SK-N-SH (cell line): ENCODE measurements at regions of chr4 and their contacts with region 1.

Region 1: DNA sequence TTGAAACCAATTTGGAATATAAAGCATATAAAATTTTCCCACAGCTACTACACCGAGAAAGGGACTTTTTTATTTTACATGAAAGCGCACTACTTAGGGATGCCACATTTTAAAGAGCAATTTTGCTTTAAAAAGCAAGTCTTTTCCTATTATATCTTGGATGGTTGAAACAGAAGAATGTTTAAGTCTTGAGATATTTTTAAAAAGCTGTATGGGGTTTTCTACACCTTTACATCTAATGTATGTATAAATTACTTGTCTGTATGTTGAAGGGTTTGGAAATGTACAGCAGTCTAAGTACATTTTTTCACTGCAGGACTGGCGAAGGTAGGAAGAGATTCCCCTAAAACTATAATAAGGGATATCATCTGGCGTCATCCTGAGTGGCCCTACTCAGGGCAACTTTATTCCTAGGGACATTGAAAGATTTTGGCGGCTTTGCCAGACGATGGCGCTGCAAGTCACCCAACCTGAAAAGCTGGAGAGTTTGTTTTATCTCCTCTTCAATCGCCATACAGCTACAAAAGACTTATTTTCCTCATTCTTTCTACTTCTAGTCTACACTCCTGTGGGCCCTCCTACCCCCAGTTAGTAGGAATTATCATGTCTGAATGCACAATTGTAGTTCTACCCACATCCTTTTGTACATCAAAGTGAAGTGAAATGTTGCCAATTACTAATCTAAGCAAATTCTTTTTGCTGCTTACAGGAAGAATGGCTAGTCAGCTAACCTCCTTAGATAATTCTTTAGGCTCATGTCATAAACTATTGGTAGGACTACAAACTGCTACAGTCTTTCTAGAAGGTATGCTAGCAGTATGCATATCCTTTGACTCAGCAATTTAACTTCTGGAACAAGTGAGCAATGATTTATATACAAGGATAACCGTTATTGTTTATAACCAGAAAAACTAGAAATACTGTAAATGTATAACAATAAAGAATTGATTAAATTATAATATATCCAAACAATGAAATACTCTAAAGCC is 782 bp upstream of the NEK1 start:
- DNase-seq: peak; percentile 65
- H3K4me3 ChIP-seq: peak overlapping the region; percentile 95 to 97
- H3K27ac ChIP-seq: peak overlapping the region; percentile 84 to 90
- H3K4me1 ChIP-seq: peaks cover 6 to 8% of the 10 kb centered on the region in 2 experiments; a peak in 1 of 4 replicates
- H3K27me3 ChIP-seq: no peaks in the 10 kb centered on the region
- CTCF ChIP-seq: peak; percentile 87
- EP300 ChIP-seq: no peak
- RAD21 ChIP-seq: peak; percentile 83

Region 2: DNA sequence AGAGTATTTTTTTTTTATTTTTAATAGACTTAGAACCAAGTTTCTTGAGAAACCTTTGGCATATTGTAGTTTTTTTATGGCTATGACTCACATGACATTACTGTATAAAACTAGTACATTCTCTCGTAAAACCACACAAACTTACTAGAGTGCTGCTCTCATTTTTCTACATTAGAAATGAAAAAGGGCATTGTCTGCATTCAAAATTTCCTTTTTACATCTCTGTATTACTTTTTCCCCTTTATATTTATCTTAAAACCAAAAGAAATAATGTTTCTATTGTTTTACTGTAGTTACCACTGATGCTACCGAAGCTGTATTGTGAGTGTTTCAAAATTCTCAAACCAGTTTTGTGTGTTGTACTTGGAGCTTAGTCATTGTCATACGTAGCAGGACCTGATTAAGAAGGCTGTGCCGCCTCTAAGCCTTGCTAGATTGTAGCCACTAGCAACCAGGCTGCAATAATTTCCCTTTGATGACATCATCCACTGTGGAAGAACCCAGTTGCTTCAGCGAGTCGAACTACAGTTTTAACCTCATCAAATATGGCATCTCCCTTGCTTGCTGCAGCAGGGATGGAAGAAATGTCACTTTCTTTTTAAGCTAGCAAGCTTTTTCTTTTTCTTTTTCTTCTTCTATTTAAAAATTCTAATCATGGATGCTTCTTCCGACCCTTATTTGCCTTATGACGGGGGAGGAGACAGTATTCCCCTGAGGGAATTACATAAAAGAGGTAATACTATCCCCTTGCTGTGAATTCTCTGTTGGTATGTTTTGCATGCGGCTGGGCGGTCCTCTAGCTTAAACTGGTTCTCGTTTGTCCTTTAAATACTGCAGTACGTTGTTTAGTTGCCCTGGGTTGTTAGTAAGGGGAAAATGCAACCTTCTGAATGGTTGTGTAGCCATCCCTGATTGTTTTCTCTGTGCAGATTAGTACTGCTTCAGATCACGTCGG is 46.8 kb after region 1 on chr4:
- CTCF ChIA-PET with region 1: interaction called, 19 read pairs
- POLR2A ChIA-PET with region 1: interaction called, 3 read pairs
- DNase-seq: peak; percentile 67
- H3K4me3 ChIP-seq: peak overlapping the region; percentile 58 to 66
- H3K27ac ChIP-seq: peak overlapping the region; percentile 93 to 99
- H3K4me1 ChIP-seq: peaks cover 21 to 36% of the 10 kb centered on the region in 2 experiments; a peak in 3 of 4 replicates
- H3K27me3 ChIP-seq: no peaks in the 10 kb centered on the region
- CTCF ChIP-seq: no peak
- EP300 ChIP-seq: 0 out of 4 replicates have a peak, but pooled peaks of 1 of the 2 experiments have one; percentile 18
- RAD21 ChIP-seq: no peak; the same call in 1 of the 2 replicates

Region 3: GRCh38 chr4:169716677-169717076 is 103.5 kb after region 1 on chr4:
- CTCF ChIA-PET with region 1: interaction called, 20 read pairs
- POLR2A ChIA-PET with region 1: no interaction called
- DNase-seq: no peak
- H3K4me3 ChIP-seq: no peak overlapping the region
- H3K27ac ChIP-seq: no peak overlapping the region
- H3K4me1 ChIP-seq: 0 out of 4 replicates have a peak, but pooled peaks cover 0 to 4% of the 10 kb centered on the region in 2 experiments
- H3K27me3 ChIP-seq: no peaks in the 10 kb centered on the region
- CTCF ChIP-seq: no peak
- EP300 ChIP-seq: no peak
- RAD21 ChIP-seq: no peak

Region 4: DNA sequence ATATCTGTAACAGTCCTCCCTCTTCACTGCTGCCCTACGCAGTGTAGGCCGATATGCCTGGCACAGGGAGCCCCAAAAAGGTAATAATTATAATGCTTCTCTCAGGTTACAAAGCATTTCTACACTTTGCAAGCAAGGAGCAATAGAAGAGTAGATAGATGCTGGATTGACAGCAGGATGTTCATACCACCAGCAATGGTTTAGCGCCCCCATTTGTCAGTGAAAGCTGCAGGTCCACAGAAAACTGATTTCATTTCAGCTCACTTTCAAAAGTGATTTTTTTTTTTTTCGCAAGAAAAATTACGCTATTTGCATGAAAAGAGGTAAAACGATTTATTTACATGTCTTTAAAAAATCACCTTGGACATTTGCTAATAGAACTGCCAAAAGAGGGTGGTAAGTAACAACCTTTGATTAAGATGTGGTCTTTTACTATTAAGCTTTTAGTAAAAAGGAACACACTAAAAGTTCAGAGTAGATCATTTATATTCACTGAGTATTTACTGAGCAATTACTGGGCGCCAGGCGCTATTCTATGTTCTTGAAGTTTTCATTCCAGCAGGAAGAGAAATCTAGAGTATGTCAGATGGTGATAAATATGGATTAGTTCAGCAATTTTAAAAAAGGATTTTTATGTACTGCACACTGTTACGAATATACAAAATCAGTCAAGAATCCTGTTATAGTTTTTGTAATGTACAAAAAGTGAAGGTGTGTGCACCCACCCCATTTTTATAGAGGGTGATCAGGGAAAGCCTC is 110.2 kb after region 1 on chr4:
- CTCF ChIA-PET with region 1: interaction called, 20 read pairs
- POLR2A ChIA-PET with region 1: no interaction called
- DNase-seq: peak; percentile 34
- H3K4me3 ChIP-seq: no peak overlapping the region
- H3K27ac ChIP-seq: no peak overlapping the region
- H3K4me1 ChIP-seq: 0 out of 4 replicates have a peak, but pooled peaks cover 0 to 5% of the 10 kb centered on the region in 2 experiments
- H3K27me3 ChIP-seq: no peaks in the 10 kb centered on the region
- CTCF ChIP-seq: peak; percentile 52
- EP300 ChIP-seq: no peak
- RAD21 ChIP-seq: peak; percentile 70

Region 5: DNA sequence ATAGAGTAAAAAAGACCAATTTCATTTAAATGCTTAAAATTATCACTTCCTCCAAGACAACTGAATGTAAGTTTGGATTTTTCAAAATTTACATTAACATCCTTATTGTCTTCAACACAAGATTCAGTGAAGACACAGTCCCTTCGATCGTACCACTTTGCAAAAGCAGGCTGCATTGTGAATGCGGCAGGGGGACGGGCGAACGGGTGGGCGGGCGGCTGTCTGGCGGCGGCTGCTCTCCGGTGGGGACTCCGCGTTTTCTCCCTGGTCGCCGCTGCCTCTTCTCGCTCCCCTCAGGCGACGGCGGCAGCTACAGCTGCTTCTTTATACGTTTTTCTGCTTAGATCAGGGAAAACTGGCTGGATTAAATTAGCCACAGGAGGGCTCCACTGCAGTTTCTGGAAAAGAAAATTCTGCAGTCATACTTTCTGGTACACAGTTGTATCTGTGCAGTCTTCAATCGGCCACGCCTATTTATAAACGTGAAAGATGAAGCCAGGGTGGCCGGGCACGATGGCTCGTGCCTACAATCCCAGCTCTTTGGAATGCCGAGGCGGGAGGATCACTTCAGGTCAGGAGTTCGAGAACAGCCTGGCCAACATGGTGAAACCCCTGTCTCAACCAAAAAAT is 178.5 kb after region 1 on chr4:
- CTCF ChIA-PET with region 1: interaction called, 11 read pairs
- POLR2A ChIA-PET with region 1: no interaction called
- DNase-seq: peak; percentile 81
- H3K4me3 ChIP-seq: peak overlapping the region; percentile 35 to 48
- H3K27ac ChIP-seq: peak overlapping the region in 1 of 2 experiments; percentile 80; a peak in 2 of 4 replicates
- H3K4me1 ChIP-seq: peaks cover 2 to 12% of the 10 kb centered on the region in 2 experiments; a peak in 2 of 4 replicates
- H3K27me3 ChIP-seq: no peaks in the 10 kb centered on the region
- CTCF ChIP-seq: peak; percentile 72
- EP300 ChIP-seq: no peak
- RAD21 ChIP-seq: peak; percentile 70

Region 6: GRCh38 chr4:169810325-169811323 is 197.5 kb after region 1 on chr4:
- CTCF ChIA-PET with region 1: interaction called, 10 read pairs
- POLR2A ChIA-PET with region 1: no interaction called
- DNase-seq: peak; percentile 64
- H3K4me3 ChIP-seq: no peak overlapping the region; a peak in 1 of 4 replicates
- H3K27ac ChIP-seq: no peak overlapping the region; a peak in 1 of 4 replicates
- H3K4me1 ChIP-seq: peaks cover 0 to 20% of the 10 kb centered on the region in 2 experiments; a peak in 2 of 4 replicates
- H3K27me3 ChIP-seq: no peaks in the 10 kb centered on the region
- CTCF ChIP-seq: peak; percentile 93
- EP300 ChIP-seq: no peak
- RAD21 ChIP-seq: peak; percentile 81

Region 7: GRCh38 chr4:170047771-170048354 is 434.7 kb after region 1 on chr4:
- CTCF ChIA-PET with region 1: interaction called, 11 read pairs
- POLR2A ChIA-PET with region 1: no interaction called
- DNase-seq: peak; percentile 51
- H3K4me3 ChIP-seq: no peak overlapping the region
- H3K27ac ChIP-seq: no peak overlapping the region
- H3K4me1 ChIP-seq: no peaks in the 10 kb centered on the region
- H3K27me3 ChIP-seq: no peaks in the 10 kb centered on the region
- CTCF ChIP-seq: peak; percentile 89
- EP300 ChIP-seq: no peak
- RAD21 ChIP-seq: peak; percentile 86

Region 8: DNA sequence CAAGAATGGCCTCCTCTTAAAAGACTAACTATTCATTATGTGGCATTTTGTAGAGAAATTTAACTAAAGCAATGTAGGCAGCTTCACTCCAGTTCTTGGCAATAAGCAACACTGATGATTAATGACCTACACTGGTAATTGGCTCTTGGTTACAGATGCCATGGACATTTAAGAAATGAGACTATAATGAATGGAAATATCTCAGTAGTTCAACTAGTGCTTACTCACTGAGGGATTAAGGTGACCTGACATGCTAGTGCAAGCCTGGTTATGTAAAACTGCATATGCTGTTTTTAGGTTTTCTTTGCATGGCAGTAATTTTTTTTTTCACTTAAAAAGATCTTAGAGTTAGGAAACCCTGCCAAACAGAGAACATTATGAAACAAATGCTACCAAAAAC is 629.3 kb after region 1 on chr4:
- CTCF ChIA-PET with region 1: no interaction called
- POLR2A ChIA-PET with region 1: no interaction called
- DNase-seq: no peak
- H3K4me3 ChIP-seq: no peak overlapping the region
- H3K27ac ChIP-seq: no peak overlapping the region
- H3K4me1 ChIP-seq: no peaks in the 10 kb centered on the region
- H3K27me3 ChIP-seq: no peaks in the 10 kb centered on the region
- CTCF ChIP-seq: no peak
- EP300 ChIP-seq: no peak
- RAD21 ChIP-seq: no peak